ENCODE measurements at regions of chr4 and their contacts with region 1.

Region 1: GRCh38 chr4:175253184-175253902 is 335.2 kb downstream of the ADAM29 start:
- DNase-seq: no peak
- H3K4me3 Mint-ChIP-seq: no peak overlapping the region
- H3K27ac Mint-ChIP-seq: no peak overlapping the region
- H3K4me1 Mint-ChIP-seq: no peaks in the 10 kb centered on the region
- H3K27me3 Mint-ChIP-seq: no peaks in the 10 kb centered on the region
- CTCF ChIP-seq: peak; percentile 26

Region 2: GRCh38 chr4:174828845-174829701 is 424.3 kb before region 1 on chr4 and contains the start of gene GLRA3:
- CTCF ChIA-PET with region 1: no interaction called
- intact Hi-C with region 1: loop called (anchors 10 kb)
- DNase-seq: peak; percentile 90
- H3K4me3 Mint-ChIP-seq: peak within 1 kb of the TSS; percentile 81
- H3K27ac Mint-ChIP-seq: peak within 1 kb of the TSS; percentile 85
- H3K4me1 Mint-ChIP-seq: no peaks in the 10 kb centered on the region
- H3K27me3 Mint-ChIP-seq: no peaks in the 10 kb centered on the region
- CTCF ChIP-seq: no peak
- total RNA-seq, gene GLRA3: 0.07 and 0.12 TPM in 2 replicates

Region 3: GRCh38 chr4:175166020-175166419 is 87.3 kb before region 1 on chr4:
- CTCF ChIA-PET with region 1: no interaction called
- intact Hi-C with region 1: loop called (anchors 5 kb)
- DNase-seq: no peak
- H3K4me3 Mint-ChIP-seq: no peak overlapping the region
- H3K27ac Mint-ChIP-seq: no peak overlapping the region
- H3K4me1 Mint-ChIP-seq: no peaks in the 10 kb centered on the region
- H3K27me3 Mint-ChIP-seq: no peaks in the 10 kb centered on the region
- CTCF ChIP-seq: no peak

Measured in Calu3 (cell line).